Activated B cell treated with CpG ODN at 0.5 μM for 24 hours (primary cell): ENCODE measurements at regions of chr4 and their contacts with region 1.

Region 1: GRCh38 chr4:5050520-5051277 is 581 bp upstream of the STK32B start:
- DNase-seq: no peak
- ATAC-seq: no peak
- H3K4me3 Mint-ChIP-seq: peak overlapping the region; percentile 81
- H3K27ac Mint-ChIP-seq: no peak overlapping the region
- H3K4me1 Mint-ChIP-seq: peaks cover 17% of the 10 kb centered on the region
- H3K27me3 Mint-ChIP-seq: peaks cover 35% of the 10 kb centered on the region
- CTCF ChIP-seq: no peak

Region 2: GRCh38 chr4:4859390-4859842 is 191.3 kb before region 1 on chr4 and contains the start of gene MSX1:
- CTCF ChIA-PET with region 1: no interaction called
- POLR2A ChIA-PET with region 1: no interaction called
- intact Hi-C with region 1: loop called (anchors 5 kb)
- DNase-seq: peak; percentile 48
- ATAC-seq: peak; percentile 78
- H3K4me3 Mint-ChIP-seq: peak within 1 kb of the TSS; percentile 78
- H3K27ac Mint-ChIP-seq: no peak within 1 kb of the TSS
- H3K4me1 Mint-ChIP-seq: peaks cover 30% of the 10 kb centered on the region
- H3K27me3 Mint-ChIP-seq: peaks cover 59% of the 10 kb centered on the region
- CTCF ChIP-seq: no peak
- total RNA-seq, gene MSX1: not detected in 2 replicates

Region 3: GRCh38 chr4:5378002-5378401 is 327.3 kb after region 1 on chr4:
- CTCF ChIA-PET with region 1: no interaction called
- POLR2A ChIA-PET with region 1: no interaction called
- intact Hi-C with region 1: no loop called
- DNase-seq: no peak
- ATAC-seq: no peak
- H3K4me3 Mint-ChIP-seq: no peak overlapping the region
- H3K27ac Mint-ChIP-seq: no peak overlapping the region
- H3K4me1 Mint-ChIP-seq: no peaks in the 10 kb centered on the region
- H3K27me3 Mint-ChIP-seq: no peaks in the 10 kb centered on the region
- CTCF ChIP-seq: no peak

Region 4: GRCh38 chr4:5460116-5460801 is 409.6 kb after region 1 on chr4:
- CTCF ChIA-PET with region 1: no interaction called
- POLR2A ChIA-PET with region 1: no interaction called
- intact Hi-C with region 1: loop called (anchors 2 kb)
- DNase-seq: no peak
- ATAC-seq: no peak
- H3K4me3 Mint-ChIP-seq: no peak overlapping the region
- H3K27ac Mint-ChIP-seq: no peak overlapping the region
- H3K4me1 Mint-ChIP-seq: no peaks in the 10 kb centered on the region
- H3K27me3 Mint-ChIP-seq: no peaks in the 10 kb centered on the region
- CTCF ChIP-seq: no peak